CD8-positive, alpha-beta T cell (primary cell): ENCODE measurements at regions of chr6 and their contacts with region 1.

Region 1: GRCh38 chr6:26196846-26197648 is 109.8 kb downstream of the HFE start:
- DNase-seq: peak; percentile 53 to 95 (median 79)
- ATAC-seq: peak; percentile 57
- H3K4me3 ChIP-seq: peak overlapping the region; percentile 78 to 82
- H3K4me3 Mint-ChIP-seq: peak overlapping the region; percentile 96
- H3K27ac ChIP-seq: peak overlapping the region; percentile 88 to 89
- H3K27ac Mint-ChIP-seq: peak overlapping the region; percentile 99
- H3K4me1 ChIP-seq: peaks cover 20% of the 10 kb centered on the region
- H3K4me1 Mint-ChIP-seq: peaks cover 44% of the 10 kb centered on the region
- H3K27me3 ChIP-seq: no peaks in the 10 kb centered on the region
- H3K27me3 Mint-ChIP-seq: no peaks in the 10 kb centered on the region
- CTCF ChIP-seq: no peak

Region 2: GRCh38 chr6:26045065-26045927 is 151.8 kb before region 1 on chr6:
- CTCF ChIA-PET with region 1: interaction called, 5 read pairs
- POLR2A ChIA-PET with region 1: interaction called, 85 read pairs
- intact Hi-C with region 1: no loop called
- DNase-seq: peak; percentile 54 to 93 (median 79)
- ATAC-seq: peak; percentile 59
- H3K4me3 ChIP-seq: peak overlapping the region; percentile 67 to 76
- H3K4me3 Mint-ChIP-seq: peak overlapping the region; percentile 89
- H3K27ac ChIP-seq: peak overlapping the region; percentile 73 to 81
- H3K27ac Mint-ChIP-seq: peak overlapping the region; percentile 98
- H3K4me1 ChIP-seq: peaks cover 7% of the 10 kb centered on the region
- H3K4me1 Mint-ChIP-seq: peaks cover 14% of the 10 kb centered on the region
- H3K27me3 ChIP-seq: no peaks in the 10 kb centered on the region
- H3K27me3 Mint-ChIP-seq: no peaks in the 10 kb centered on the region
- CTCF ChIP-seq: no peak

Region 3: DNA sequence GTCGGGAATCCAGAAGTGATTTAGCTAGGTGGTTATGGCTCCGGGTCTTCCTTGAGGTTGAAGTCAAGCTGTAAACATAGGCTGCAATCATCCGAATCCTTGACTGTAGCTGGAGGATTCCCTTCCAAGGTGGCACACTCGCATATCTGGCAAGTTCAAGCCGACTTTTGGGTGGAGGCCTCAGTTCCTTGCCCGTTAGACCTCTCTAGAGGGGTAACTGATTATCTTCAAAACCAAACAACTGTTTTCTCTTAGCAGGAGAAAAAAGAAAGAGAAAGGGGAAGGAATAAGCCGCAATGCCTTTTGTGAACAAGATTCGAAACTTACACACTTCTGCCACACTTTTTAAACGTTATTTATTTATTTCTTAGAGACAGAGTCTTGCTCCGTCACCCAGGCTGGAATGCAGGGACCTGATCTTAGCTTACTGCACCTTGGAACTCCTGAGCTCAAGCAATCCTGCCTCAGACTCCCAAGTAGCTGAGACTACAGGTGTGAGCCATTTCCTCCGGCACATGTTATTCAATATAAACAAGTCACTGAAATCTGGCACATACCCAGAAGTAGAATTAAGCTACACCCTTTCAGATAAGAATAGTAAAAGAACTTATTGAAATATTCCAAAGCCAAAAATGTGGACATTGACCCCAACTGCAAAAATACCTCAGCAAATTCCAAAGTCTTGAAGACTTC is 33.5 kb before region 1 on chr6:
- CTCF ChIA-PET with region 1: interaction called, 22 read pairs
- POLR2A ChIA-PET with region 1: interaction called, 1,041 read pairs
- intact Hi-C with region 1: no loop called
- DNase-seq: no peak
- ATAC-seq: no peak
- H3K4me3 ChIP-seq: no peak overlapping the region
- H3K4me3 Mint-ChIP-seq: peak overlapping the region; percentile 42
- H3K27ac ChIP-seq: no peak overlapping the region
- H3K27ac Mint-ChIP-seq: peak overlapping the region; percentile 70
- H3K4me1 ChIP-seq: peaks cover 40% of the 10 kb centered on the region
- H3K4me1 Mint-ChIP-seq: peaks cover 48% of the 10 kb centered on the region
- H3K27me3 ChIP-seq: no peaks in the 10 kb centered on the region
- H3K27me3 Mint-ChIP-seq: no peaks in the 10 kb centered on the region
- CTCF ChIP-seq: no peak

Region 4: DNA sequence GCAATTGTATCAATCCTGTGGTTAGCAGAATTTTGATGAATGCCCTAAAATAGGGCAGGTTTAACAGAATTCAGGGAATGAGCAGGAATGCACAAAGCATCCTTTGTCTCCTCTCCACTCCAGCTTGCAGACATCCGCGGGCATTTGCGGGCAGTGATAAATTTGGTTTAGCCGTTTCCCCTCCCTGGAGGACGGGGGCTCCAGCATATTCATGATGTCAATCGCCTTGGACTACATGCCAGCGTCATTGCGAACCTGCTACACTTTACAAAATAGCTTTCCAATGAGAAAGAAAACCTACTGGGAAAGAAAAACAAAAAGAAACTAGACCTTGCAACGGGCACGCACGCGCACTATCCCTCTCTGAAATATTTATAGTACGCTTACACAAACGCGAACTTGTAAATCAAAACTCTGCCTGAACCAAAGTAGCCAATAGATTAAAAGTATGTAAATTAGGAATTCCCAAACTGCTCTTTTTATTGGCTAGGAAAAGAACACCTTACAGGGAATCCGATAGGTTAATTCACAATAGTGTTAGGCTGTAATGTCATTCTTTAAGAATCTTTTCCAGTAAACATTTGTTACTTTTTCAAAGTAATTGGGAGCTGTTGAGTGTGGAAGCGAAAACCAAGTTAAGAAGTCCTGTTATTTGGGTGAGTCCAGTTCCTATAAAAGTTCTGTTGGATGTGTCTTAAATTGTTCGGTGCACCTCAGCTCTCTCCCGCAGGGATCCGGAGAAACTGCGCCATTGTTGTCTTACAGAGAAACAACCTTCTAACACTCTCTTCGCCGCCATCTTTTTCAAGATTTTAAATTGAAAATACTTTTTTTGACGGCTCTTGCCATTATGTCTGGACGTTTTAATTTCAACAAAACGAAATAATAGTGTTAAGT is 26.9 kb after region 1 on chr6:
- CTCF ChIA-PET with region 1: interaction called, 4 read pairs
- POLR2A ChIA-PET with region 1: interaction called, 136 read pairs
- intact Hi-C with region 1: no loop called
- DNase-seq: peak in 8 of 9 experiments; percentile 42 to 90 (median 72)
- ATAC-seq: peak; percentile 85
- H3K4me3 ChIP-seq: peak overlapping the region; percentile 64 to 72
- H3K4me3 Mint-ChIP-seq: no peak overlapping the region
- H3K27ac ChIP-seq: peak overlapping the region; percentile 76 to 87
- H3K27ac Mint-ChIP-seq: no peak overlapping the region
- H3K4me1 ChIP-seq: peaks cover 20% of the 10 kb centered on the region
- H3K4me1 Mint-ChIP-seq: peaks cover 24% of the 10 kb centered on the region
- H3K27me3 ChIP-seq: no peaks in the 10 kb centered on the region
- H3K27me3 Mint-ChIP-seq: no peaks in the 10 kb centered on the region
- CTCF ChIP-seq: no peak

Region 5: GRCh38 chr6:26270903-26271667 is 74.0 kb after region 1 on chr6:
- CTCF ChIA-PET with region 1: interaction called, 3 read pairs
- POLR2A ChIA-PET with region 1: interaction called, 189 read pairs
- intact Hi-C with region 1: loop called (anchors 1 to 2 kb)
- DNase-seq: peak; percentile 68 to 91 (median 80)
- ATAC-seq: peak; percentile 22
- H3K4me3 ChIP-seq: peak overlapping the region; percentile 65 to 67
- H3K4me3 Mint-ChIP-seq: no peak overlapping the region
- H3K27ac ChIP-seq: peak overlapping the region; percentile 73 to 92
- H3K27ac Mint-ChIP-seq: peak overlapping the region; percentile 73
- H3K4me1 ChIP-seq: peaks cover 22% of the 10 kb centered on the region
- H3K4me1 Mint-ChIP-seq: peaks cover 13% of the 10 kb centered on the region
- H3K27me3 ChIP-seq: no peaks in the 10 kb centered on the region
- H3K27me3 Mint-ChIP-seq: no peaks in the 10 kb centered on the region
- CTCF ChIP-seq: no peak

Region 6: GRCh38 chr6:26545627-26546026 is 348.6 kb after region 1 on chr6:
- CTCF ChIA-PET with region 1: no interaction called
- POLR2A ChIA-PET with region 1: no interaction called
- intact Hi-C with region 1: no loop called
- DNase-seq: no peak
- ATAC-seq: no peak
- H3K4me3 ChIP-seq: no peak overlapping the region
- H3K4me3 Mint-ChIP-seq: no peak overlapping the region
- H3K27ac ChIP-seq: no peak overlapping the region
- H3K27ac Mint-ChIP-seq: no peak overlapping the region
- H3K4me1 ChIP-seq: peaks cover 6% of the 10 kb centered on the region
- H3K4me1 Mint-ChIP-seq: peaks cover 34% of the 10 kb centered on the region
- H3K27me3 ChIP-seq: no peaks in the 10 kb centered on the region
- H3K27me3 Mint-ChIP-seq: no peaks in the 10 kb centered on the region
- CTCF ChIP-seq: no peak

Region 7: DNA sequence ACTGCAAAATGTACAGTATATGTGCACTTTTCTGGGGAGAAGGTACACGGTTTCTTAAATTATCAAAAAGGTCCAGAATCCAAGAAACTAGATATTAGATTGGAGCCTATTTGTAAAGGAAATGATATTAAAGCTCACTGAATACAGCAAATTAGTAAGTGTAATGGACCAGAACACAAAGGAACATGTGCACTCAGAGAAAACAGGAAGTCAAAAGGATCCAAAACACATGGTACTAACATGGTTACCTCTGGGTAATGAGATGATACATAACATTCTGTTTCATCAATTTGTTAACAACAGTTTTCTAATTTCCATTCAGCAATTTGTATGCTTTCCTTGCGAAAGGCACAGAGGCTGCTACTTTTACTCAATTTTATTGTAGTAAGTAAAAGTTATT is 443.8 kb after region 1 on chr6:
- CTCF ChIA-PET with region 1: no interaction called
- POLR2A ChIA-PET with region 1: no interaction called
- intact Hi-C with region 1: no loop called
- DNase-seq: no peak
- ATAC-seq: no peak
- H3K4me3 ChIP-seq: no peak overlapping the region
- H3K4me3 Mint-ChIP-seq: no peak overlapping the region
- H3K27ac ChIP-seq: no peak overlapping the region
- H3K27ac Mint-ChIP-seq: no peak overlapping the region
- H3K4me1 ChIP-seq: no peaks in the 10 kb centered on the region
- H3K4me1 Mint-ChIP-seq: peaks cover 3% of the 10 kb centered on the region
- H3K27me3 ChIP-seq: no peaks in the 10 kb centered on the region
- H3K27me3 Mint-ChIP-seq: no peaks in the 10 kb centered on the region
- CTCF ChIP-seq: no peak

Region 8: GRCh38 chr6:27146706-27147505 is 949.9 kb after region 1 on chr6:
- CTCF ChIA-PET with region 1: no interaction called
- POLR2A ChIA-PET with region 1: interaction called, 61 read pairs
- intact Hi-C with region 1: no loop called
- DNase-seq: peak; percentile 56 to 98 (median 74)
- ATAC-seq: peak; percentile 85
- H3K4me3 ChIP-seq: peak overlapping the region; percentile 71 to 77
- H3K4me3 Mint-ChIP-seq: no peak overlapping the region
- H3K27ac ChIP-seq: peak overlapping the region; percentile 84 to 91
- H3K27ac Mint-ChIP-seq: no peak overlapping the region
- H3K4me1 ChIP-seq: peaks cover 11% of the 10 kb centered on the region
- H3K4me1 Mint-ChIP-seq: peaks cover 13% of the 10 kb centered on the region
- H3K27me3 ChIP-seq: no peaks in the 10 kb centered on the region
- H3K27me3 Mint-ChIP-seq: no peaks in the 10 kb centered on the region
- CTCF ChIP-seq: no peak

Region 9: GRCh38 chr6:27871924-27872638 is 1675.0 kb after region 1 on chr6:
- CTCF ChIA-PET with region 1: no interaction called
- POLR2A ChIA-PET with region 1: interaction called, 41 read pairs
- intact Hi-C with region 1: no loop called
- DNase-seq: peak; percentile 72 to 97 (median 85)
- ATAC-seq: peak; percentile 75
- H3K4me3 ChIP-seq: peak overlapping the region; percentile 54 to 67
- H3K4me3 Mint-ChIP-seq: peak overlapping the region; percentile 82
- H3K27ac ChIP-seq: peak overlapping the region; percentile 81 to 86
- H3K27ac Mint-ChIP-seq: peak overlapping the region; percentile 98
- H3K4me1 ChIP-seq: peaks cover 20% of the 10 kb centered on the region
- H3K4me1 Mint-ChIP-seq: peaks cover 36% of the 10 kb centered on the region
- H3K27me3 ChIP-seq: peaks cover 0 to 3% of the 10 kb centered on the region in 2 experiments
- H3K27me3 Mint-ChIP-seq: no peaks in the 10 kb centered on the region
- CTCF ChIP-seq: peak; percentile 48